MCF 10A (cell line): ENCODE measurements at regions of chr1 and their contacts with region 1.

Region 1: DNA sequence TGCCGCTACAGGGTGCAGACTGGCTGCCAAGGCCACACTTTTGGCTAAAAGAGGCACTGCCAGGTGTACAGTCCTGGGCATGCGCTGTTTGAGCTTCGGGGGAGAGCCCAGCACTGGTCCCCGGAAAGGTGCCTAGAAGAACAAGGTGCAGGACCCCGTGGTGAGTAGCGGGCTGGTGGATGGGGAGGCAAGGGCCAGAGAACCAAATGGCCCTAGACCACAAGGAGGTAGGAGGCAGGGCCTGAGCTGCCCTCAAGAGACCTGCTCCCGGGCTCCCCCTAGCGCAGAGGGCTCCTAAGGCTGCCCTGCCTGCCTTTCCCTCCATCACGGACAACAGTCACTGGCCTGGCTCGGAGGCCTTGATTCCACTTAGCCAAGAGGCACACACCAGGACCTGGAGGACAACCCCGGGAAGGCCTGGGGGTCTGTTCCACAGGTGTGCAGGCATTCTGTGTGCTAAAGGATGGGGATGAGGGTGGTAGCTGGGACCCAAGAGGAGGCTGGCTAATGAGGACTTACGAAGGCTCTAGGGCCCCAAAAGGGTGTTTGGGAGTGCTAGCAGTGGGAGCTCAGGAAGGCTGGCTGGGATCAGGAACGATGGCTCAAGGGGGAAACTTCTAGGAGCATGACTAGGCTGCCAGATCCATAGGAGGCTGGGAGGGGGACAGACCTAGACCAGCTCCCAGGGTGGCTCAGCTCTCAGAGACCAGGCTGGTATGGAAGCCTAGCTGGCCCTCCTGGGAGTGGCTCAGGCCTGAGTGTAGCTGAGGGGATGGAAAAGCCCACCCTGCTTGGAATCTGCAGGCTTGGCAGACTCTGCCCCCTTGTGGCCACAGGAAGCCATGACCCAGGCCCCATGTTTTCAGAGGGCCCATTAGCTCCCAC is 742 bp downstream of the ARTN start:
- DNase-seq: peak; percentile 68
- H3K4me3 Mint-ChIP-seq: peak overlapping the region; percentile 34
- H3K27ac Mint-ChIP-seq: no peak overlapping the region
- H3K4me1 Mint-ChIP-seq: peaks cover 34% of the 10 kb centered on the region
- H3K27me3 Mint-ChIP-seq: no peaks in the 10 kb centered on the region
- CTCF ChIP-seq: peak; percentile 92

Region 2: DNA sequence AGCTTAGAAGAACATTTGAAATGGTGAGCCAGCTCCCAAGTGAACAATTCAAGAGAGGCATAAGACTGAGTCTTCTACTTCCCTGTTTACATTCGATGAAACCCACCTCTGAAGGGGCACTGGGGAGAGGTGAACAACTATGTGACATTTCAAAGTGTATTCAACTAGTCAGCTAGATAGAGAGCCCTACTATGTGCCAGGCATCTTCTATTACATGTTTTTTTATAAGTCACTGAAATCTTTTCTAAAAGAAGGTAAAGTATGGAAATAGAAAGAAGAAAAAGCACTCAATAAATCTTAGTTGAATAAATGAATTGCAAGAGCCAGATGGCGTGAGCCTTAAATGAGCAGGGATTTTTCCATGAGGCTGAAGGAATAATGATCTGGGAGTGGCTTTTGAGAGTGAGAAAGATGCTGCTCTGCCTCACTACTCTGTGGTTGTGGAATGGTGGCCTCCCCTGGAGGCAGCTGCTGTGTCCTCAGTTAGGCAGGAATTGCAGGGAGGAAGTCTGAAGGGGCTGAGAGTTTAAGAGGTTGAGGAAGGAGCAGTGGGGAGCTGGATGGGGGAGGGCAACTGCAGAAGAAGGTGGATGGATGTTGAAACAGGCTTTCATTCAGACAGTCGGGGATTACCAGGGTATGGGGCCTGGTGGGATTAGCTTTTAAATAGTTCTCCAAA is 414.1 kb before region 1 on chr1:
- CTCF ChIA-PET with region 1: no interaction called
- POLR2A ChIA-PET with region 1: no interaction called
- intact Hi-C with region 1: no loop called
- DNase-seq: no peak
- H3K4me3 Mint-ChIP-seq: no peak overlapping the region
- H3K27ac Mint-ChIP-seq: no peak overlapping the region
- H3K4me1 Mint-ChIP-seq: peaks cover 22% of the 10 kb centered on the region
- H3K27me3 Mint-ChIP-seq: no peaks in the 10 kb centered on the region
- CTCF ChIP-seq: no peak

Region 3: DNA sequence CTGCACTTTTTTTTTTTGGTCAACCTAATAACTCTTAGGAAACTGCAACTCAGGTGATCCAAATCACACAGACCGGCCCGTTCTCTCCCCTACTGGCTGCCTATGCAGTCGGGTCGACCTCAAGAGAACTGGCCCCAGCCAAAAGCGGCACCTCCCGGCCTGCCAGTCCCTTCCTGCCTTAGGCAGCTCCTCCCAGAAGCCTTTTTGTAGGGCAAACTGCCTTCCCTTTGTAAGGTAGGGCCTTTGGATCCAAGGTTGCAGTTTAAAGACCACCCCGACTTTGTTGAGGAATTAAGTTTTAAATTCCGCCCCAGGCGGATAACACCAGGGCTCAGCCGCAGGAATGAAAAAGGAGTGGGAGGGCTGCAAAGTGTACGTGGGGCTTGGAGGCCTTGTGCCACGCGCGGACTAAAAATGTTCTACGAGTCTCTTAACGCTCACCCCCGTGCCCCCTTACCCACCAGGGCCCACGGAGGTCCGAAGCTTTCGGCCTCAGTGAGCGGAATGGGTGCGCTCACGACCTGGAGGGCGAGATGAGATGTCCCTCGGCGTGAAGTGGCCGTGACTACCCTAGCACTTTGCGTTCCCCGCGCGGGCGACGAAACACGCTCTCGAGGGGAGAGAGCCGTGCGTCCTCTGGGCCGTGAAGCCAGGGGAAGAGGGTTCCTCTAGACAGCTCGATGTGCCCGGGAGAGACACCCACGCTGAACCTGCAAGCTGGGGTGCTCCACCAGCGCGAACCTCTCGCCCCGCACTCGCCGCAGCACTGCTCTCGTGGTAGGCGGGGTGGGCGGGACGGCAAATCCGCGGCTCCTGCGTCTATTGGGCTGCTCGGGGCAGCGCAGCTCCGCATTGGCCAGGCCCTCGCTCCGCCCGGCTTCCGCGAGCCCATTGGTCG is 227.5 kb before region 1 on chr1:
- CTCF ChIA-PET with region 1: interaction called, 3 read pairs
- POLR2A ChIA-PET with region 1: no interaction called
- intact Hi-C with region 1: loop called (anchors 2 kb)
- DNase-seq: peak; percentile 87
- H3K4me3 Mint-ChIP-seq: peak overlapping the region; percentile 82
- H3K27ac Mint-ChIP-seq: peak overlapping the region; percentile 54
- H3K4me1 Mint-ChIP-seq: peaks cover 26% of the 10 kb centered on the region
- H3K27me3 Mint-ChIP-seq: no peaks in the 10 kb centered on the region
- CTCF ChIP-seq: no peak

Region 4: DNA sequence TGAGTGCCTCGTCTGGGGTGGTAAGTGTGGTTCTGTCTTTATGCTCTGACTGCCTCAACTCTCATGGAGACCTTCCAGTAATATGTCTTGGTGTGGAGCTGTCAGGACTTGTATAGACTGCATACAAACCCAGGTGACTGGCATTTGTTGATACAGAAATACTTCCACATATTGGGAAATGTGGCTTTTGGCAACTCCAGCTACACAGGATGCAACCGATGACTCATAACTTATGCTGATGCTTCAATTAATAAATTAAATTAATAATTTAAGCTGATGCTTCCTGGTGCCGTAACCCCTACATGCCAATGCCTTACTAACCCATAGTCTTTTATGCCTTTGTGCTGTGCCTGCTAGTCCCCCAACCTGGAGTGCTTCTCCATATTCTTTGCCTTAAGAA is 73.0 kb before region 1 on chr1:
- CTCF ChIA-PET with region 1: interaction called, 16 read pairs
- POLR2A ChIA-PET with region 1: interaction called, 4 read pairs
- intact Hi-C with region 1: loop called (anchors 10 kb)
- DNase-seq: peak; percentile 77
- H3K4me3 Mint-ChIP-seq: no peak overlapping the region
- H3K27ac Mint-ChIP-seq: no peak overlapping the region
- H3K4me1 Mint-ChIP-seq: peaks cover 26% of the 10 kb centered on the region
- H3K27me3 Mint-ChIP-seq: no peaks in the 10 kb centered on the region
- CTCF ChIP-seq: no peak

Region 5: DNA sequence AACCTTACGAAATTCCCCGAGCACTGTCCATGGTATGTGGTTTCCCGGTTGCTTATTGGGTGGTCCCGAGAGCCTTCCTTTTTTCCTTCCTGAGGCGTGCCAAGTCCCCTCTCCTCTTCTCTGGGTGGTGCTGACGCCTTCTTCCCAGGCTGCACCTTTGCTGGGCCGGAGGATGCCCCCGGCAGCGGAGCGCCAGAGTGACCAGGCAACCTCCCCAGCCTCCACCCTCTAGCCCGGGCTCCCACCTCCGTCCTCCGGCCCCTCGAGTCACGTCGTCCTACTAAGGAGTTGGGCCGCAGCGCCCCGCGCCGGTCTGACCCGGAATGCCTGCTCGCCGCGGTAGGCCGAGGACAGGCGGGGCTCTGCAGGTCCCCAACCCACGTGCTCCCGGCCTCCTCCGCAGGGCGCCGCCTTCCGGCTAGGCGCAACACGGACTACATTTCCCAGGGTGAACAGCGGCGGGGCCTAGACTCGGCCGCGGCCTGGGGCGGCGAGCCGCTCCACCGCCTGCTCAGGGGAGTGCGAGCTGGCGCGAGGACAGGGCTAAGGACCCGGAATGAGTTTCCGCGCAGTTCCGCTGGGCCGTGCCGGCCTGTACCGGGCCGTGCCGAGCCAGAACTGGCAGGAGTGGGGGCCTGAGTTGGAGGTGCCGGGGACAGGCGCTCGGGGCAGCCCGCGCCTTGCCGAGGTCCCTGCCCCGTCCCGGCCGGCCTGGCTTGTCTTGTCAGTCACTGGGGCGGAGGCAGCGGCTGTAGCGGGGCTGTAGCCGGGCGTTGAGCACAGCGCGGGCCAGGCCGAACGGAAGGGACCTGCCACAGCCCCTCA is 12.1 kb after region 1 on chr1 and contains the start of gene IPO13:
- CTCF ChIA-PET with region 1: interaction called, 60 read pairs
- POLR2A ChIA-PET with region 1: interaction called, 11 read pairs
- intact Hi-C with region 1: no loop called
- DNase-seq: peak; percentile 94
- H3K4me3 Mint-ChIP-seq: peak within 1 kb of the TSS; percentile 99
- H3K27ac Mint-ChIP-seq: peak within 1 kb of the TSS; percentile 99
- H3K4me1 Mint-ChIP-seq: peaks cover 30% of the 10 kb centered on the region
- H3K27me3 Mint-ChIP-seq: no peaks in the 10 kb centered on the region
- CTCF ChIP-seq: peak; percentile 56
- total RNA-seq, gene IPO13: 23.9 and 31.4 TPM in 2 replicates

Region 6: DNA sequence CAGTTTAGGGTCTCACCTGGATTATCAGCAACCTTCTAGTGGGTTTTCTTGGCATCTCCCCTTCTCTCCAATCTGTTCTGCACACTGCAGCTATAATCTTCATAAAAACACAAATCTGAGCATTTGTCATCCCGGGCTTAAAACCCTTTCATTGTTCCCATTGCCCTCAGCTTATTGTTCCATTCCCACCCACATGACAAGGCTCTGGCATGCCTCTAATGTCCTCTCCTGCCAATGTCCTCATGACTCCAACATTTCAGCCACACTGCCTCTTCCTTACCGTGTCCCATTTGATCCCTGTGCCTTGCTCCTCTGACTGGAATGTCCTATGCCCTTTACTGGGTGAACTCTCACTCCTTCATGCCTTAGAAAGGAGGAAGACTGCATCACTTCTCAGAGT is 28.0 kb after region 1 on chr1:
- CTCF ChIA-PET with region 1: interaction called, 10 read pairs
- POLR2A ChIA-PET with region 1: no interaction called
- intact Hi-C with region 1: no loop called
- DNase-seq: no peak
- H3K4me3 Mint-ChIP-seq: no peak overlapping the region
- H3K27ac Mint-ChIP-seq: no peak overlapping the region
- H3K4me1 Mint-ChIP-seq: no peaks in the 10 kb centered on the region
- H3K27me3 Mint-ChIP-seq: no peaks in the 10 kb centered on the region
- CTCF ChIP-seq: no peak

Region 7: GRCh38 chr1:44012941-44013609 is 78.7 kb after region 1 on chr1:
- CTCF ChIA-PET with region 1: no interaction called
- POLR2A ChIA-PET with region 1: no interaction called
- intact Hi-C with region 1: no loop called
- DNase-seq: no peak
- H3K4me3 Mint-ChIP-seq: no peak overlapping the region
- H3K27ac Mint-ChIP-seq: no peak overlapping the region
- H3K4me1 Mint-ChIP-seq: no peaks in the 10 kb centered on the region
- H3K27me3 Mint-ChIP-seq: no peaks in the 10 kb centered on the region
- CTCF ChIP-seq: no peak

Region 8: DNA sequence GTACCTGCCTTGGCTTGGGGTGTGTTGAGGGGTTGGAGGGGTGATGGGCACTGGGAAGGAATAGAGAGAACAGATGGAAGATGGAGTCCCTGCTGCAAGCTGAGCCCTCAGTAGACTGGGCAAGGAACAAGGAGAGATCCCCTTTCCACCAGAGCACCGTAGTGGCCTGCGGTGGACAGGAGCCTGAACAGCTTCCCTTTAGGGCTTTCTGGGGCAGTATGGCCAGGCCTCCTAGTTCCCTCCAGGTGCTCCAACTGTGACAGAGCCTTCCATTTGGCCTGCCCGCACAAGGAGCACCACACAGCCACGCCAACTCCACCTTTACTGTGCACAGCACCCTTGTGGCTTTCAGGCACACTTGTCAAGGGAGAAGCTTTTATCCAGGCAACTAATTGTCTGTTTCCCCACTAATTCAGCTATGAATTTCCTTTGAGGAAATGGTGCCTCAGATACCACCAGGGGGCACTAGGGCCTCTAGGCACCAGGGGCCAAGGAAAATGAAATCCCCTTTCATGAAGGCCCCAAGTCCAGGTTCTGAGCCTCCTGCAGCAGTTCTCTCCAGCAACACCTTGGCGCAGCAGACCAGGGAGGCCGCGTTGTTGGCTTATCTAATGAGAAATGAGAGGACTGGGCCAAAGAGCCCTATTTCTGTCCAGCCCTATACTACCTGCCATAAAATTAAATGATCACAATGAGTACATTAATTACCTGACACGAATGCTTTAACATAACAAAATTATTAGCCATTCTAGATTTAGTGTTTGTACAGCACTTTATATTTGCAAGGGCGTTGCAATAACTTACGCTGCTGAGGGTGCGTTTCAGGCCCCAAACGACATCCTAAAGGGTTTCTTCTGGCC is 443.8 kb after region 1 on chr1:
- CTCF ChIA-PET with region 1: no interaction called
- POLR2A ChIA-PET with region 1: no interaction called
- intact Hi-C with region 1: no loop called
- DNase-seq: peak; percentile 72
- H3K4me3 Mint-ChIP-seq: no peak overlapping the region
- H3K27ac Mint-ChIP-seq: no peak overlapping the region
- H3K4me1 Mint-ChIP-seq: no peaks in the 10 kb centered on the region
- H3K27me3 Mint-ChIP-seq: no peaks in the 10 kb centered on the region
- CTCF ChIP-seq: peak; percentile 72